Left ventricle myocardium superior (tissue), 1 donor: ENCODE measurements at regions of chr11 and their contacts with region 1.

Region 1: GRCh38 chr11:118145285-118146227 is 7.1 kb downstream of the SCN4B start:
- DNase-seq: peak; percentile 92
- ATAC-seq: peak; percentile 89

Region 2: DNA sequence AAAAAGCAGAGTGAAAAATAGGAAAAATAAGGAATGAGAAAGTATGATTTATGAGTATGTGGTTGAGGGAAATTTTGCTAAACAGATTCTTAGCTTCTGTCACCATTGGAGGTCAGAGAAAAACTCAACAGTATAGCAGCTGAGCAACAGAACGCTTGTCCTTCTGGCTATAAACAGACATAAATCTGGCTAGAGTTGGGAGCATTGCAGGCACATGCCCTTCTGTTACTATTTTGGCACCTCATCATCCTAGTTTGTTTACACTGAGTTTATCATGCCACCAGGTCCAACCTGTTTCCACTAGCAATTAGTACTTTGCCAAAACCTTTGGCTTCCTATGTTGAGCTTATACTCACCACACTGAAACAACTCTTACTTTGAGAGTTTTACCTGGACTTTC is 220.7 kb after region 1 on chr11:
- intact Hi-C with region 1: loop called (anchors 10 kb)
- DNase-seq: no peak
- ATAC-seq: peak; percentile 97